Colonic mucosa (tissue), 4 donors: ENCODE measurements at regions of chr20 and their contacts with region 1.

Region 1: GRCh38 chr20:62136283-62137091 is 6.7 kb downstream of the PSMA7 start:
- DNase-seq: peak; percentile 70
- H3K4me3 ChIP-seq: no peak overlapping the region
- H3K27ac ChIP-seq: no peak overlapping the region
- H3K4me1 ChIP-seq: peaks cover 6% of the 10 kb centered on the region
- H3K27me3 ChIP-seq: no peaks in the 10 kb centered on the region
- CTCF ChIP-seq: peak; percentile 70

Region 2: GRCh38 chr20:61886721-61887594 is 249.5 kb before region 1 on chr20:
- intact Hi-C with region 1: no loop called
- DNase-seq: peak; percentile 21
- H3K4me3 ChIP-seq: no peak overlapping the region
- H3K27ac ChIP-seq: no peak overlapping the region
- H3K4me1 ChIP-seq: no peaks in the 10 kb centered on the region
- H3K27me3 ChIP-seq: no peaks in the 10 kb centered on the region
- CTCF ChIP-seq: peak; percentile 52

Region 3: DNA sequence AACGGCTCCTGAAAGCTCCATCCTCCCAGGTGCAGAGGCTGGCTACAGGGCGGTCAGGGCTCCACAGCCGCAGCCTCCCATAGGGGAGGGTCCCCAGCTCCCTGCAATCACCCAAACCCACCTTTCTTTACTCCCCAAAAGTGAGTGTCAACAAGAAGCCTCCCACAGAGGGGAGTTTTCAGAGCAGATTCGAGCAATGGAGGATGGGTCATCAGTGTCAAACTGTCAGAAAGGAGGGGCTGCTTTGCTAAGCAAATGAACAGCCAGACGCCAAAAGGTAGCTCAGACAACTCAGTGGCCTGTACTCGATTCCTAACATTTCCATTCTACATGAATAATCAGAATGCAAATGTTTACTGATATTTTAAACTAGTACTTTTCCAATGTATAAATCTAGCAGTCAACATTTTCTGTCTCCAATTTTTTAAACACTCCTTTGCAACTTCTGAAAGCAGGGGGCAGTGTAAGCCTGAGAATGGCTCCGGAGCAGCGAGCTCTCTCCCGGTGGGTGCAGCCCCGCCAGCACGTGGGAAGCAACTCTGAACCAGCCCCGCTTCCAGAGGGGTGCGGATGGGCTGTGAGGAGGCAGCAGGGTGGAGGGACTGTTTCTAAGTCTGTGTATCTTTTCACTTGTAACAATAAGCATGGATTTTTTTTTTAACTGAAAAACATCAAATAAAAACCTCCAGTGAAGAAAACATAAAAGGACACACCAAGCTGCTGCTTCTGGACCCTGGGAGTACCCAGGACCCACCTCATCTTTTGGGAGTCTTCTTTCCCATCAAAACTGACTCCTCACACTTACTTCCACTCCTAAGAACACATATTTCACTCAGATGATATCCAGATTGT is 125.7 kb before region 1 on chr20:
- intact Hi-C with region 1: loop called (anchors 5 kb)
- DNase-seq: peak; percentile 55
- H3K4me3 ChIP-seq: no peak overlapping the region
- H3K27ac ChIP-seq: no peak overlapping the region
- H3K4me1 ChIP-seq: no peaks in the 10 kb centered on the region
- H3K27me3 ChIP-seq: no peaks in the 10 kb centered on the region
- CTCF ChIP-seq: peak; percentile 65

Region 4: DNA sequence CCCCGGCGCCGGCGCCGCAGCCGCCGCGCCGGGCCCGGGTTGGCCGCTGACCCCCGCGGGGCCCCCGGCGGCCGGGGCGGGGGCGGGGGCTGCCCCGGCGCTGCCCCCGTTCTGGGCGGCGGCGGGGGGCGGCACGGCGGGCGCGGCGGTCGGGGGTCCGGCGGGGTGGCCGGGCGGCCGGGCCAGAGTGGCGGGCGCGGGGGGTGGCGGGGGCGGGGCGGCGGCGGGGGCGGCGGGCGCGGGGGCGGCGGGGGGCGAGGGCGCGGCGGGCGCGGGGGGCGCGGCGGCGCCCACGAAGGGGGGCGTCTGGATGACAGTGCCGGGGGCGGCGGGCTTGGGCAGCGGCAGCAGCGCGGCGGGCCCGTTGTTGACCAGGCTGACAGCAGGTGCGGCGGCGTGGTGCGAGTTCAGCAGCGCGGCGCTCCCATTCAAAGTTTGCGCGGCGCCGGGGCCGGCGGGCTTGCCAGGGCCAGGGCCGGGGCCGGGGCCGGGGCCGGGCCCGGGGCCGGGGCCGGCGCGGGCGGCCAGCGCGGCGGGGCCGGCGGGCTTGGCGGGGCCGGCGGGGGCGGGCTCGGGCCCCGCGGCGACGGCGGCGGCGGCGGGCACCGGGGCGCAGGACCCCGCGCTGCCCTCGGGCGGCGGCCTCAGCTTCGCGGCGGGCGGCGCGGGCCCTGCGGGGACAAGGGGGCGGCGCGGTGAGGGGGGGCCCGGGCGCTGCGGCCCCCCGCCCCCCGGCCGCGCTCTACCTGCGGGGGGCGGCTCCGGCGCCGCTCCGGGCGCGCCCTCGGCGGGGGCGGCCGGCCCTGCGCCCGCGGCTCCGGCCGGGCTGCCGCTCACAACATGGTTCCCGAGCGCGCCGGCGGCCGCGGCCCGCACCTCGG is 71.5 kb before region 1 on chr20:
- intact Hi-C with region 1: loop called (anchors 5 kb)
- DNase-seq: no peak
- H3K4me3 ChIP-seq: peak overlapping the region; percentile 30
- H3K27ac ChIP-seq: no peak overlapping the region
- H3K4me1 ChIP-seq: peaks cover 39% of the 10 kb centered on the region
- H3K27me3 ChIP-seq: no peaks in the 10 kb centered on the region
- CTCF ChIP-seq: no peak

Region 5: DNA sequence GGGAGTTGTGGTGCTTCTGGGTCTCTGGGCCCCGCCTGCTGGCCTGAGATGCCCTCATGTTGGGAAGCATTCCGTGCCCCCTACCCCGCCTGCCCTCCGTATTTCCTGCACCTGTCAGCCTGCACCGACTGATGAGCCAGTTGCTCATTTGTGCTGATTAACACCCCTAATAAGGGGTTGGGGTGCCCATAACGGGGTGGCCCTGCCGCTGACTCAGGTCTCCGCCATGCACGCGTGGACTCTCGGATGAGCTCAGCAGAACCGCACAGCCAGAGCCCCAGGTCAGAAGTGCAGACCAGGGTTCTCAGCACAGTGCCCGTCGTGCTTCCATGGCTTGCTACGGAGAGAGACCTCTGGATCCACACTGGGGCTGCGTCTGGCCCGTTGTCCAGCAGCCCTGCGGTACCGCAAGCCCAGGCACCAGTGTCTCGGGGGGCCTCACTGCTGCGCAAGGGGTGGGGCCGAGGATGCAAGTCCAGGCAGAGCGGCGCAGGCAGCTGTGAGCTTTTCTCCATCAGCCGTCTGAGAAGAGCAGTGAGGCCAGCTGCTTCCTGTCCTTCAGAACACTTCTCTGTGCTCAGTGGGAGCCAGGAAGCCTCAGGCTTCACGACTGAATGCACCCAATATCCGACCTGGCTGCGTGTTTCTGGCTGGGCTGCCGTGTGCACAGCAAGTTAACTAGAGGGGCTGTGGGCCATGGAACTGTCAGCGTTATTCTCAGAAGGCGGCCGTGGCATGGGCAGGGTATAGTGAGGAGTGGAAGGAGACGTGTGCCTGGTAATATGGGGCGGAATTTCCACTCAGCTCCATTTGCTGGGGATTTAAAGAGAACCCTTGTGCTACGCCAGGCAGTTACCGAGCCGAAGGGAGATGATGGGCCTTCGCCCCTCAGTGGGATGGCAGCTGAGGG is 64.9 kb after region 1 on chr20:
- intact Hi-C with region 1: no loop called
- DNase-seq: no peak
- H3K4me3 ChIP-seq: no peak overlapping the region
- H3K27ac ChIP-seq: no peak overlapping the region
- H3K4me1 ChIP-seq: no peaks in the 10 kb centered on the region
- H3K27me3 ChIP-seq: no peaks in the 10 kb centered on the region
- CTCF ChIP-seq: no peak

Region 6: GRCh38 chr20:62675156-62675876 is 538.8 kb after region 1 on chr20:
- intact Hi-C with region 1: no loop called
- DNase-seq: no peak
- H3K4me3 ChIP-seq: no peak overlapping the region
- H3K27ac ChIP-seq: no peak overlapping the region
- H3K4me1 ChIP-seq: no peaks in the 10 kb centered on the region
- H3K27me3 ChIP-seq: no peaks in the 10 kb centered on the region
- CTCF ChIP-seq: no peak

Region 7: DNA sequence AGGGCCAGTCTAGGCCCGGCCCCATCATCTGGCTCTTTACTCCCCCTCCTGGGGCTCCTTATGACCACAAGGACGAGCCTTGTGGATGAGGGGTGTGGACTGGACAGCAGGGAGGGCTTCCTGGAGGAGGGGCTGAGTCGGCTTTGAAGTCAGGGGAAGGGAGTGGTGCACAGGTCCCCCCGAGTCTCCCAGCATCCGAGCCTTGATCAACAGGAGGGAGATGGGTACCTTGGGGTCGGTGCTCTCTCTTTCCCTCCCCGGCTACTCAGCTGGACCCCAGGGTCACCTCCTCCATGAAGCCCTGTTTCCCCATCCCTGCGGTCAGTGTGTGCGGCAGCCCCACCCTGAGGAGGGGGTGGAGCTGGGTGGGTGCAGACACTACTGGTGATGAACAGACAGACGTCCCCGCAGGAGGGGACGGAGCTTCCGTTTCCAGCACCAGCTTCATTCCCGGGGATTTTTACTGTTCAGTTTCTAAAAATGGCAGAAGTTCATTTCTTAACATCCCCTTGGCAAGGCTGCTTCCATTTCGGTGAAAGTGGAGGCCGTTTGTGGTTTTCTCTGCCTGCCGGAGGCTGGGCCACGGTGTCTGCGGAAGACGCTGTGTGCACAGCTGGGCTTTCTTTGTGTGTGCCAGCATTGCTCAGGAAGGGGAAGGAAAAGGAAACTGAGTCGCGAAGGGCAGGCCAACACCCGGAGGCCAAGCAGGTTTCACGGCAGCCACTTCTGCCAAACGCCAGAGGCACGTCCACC is 591.7 kb after region 1 on chr20:
- intact Hi-C with region 1: no loop called
- DNase-seq: no peak
- H3K4me3 ChIP-seq: no peak overlapping the region
- H3K27ac ChIP-seq: no peak overlapping the region
- H3K4me1 ChIP-seq: no peaks in the 10 kb centered on the region
- H3K27me3 ChIP-seq: no peaks in the 10 kb centered on the region
- CTCF ChIP-seq: no peak